Activated T-helper 1 cell treated with anti-CD3 and anti-CD28 coated beads, Interleukin-12 subunit alpha, Interleukin-12 subunit beta, Interleukin-2, Interleukin-4 antibody, amounts not matched to agents 30 ng/mL and 10 ng/mL and 1 ng/mL, durations not matched to agents 14 hours and 24 hours and 36 hours (primary cell): ENCODE measurements at regions of chr12 and their contacts with region 1.

Region 1: GRCh38 chr12:85866986-85867776 is 6.9 kb upstream of the NTS start:
- DNase-seq: no peak
- H3K4me3 Mint-ChIP-seq: no peak overlapping the region
- H3K27ac Mint-ChIP-seq: no peak overlapping the region
- H3K4me1 Mint-ChIP-seq: no peaks in the 10 kb centered on the region
- H3K27me3 Mint-ChIP-seq: peaks cover 3% of the 10 kb centered on the region

Region 2: GRCh38 chr12:85468356-85469157 is 398.6 kb before region 1 on chr12:
- intact Hi-C with region 1: loop called (anchors 1 kb)
- DNase-seq: peak; percentile 13
- H3K4me3 Mint-ChIP-seq: peak overlapping the region; percentile 74
- H3K27ac Mint-ChIP-seq: no peak overlapping the region
- H3K4me1 Mint-ChIP-seq: peaks cover 17% of the 10 kb centered on the region
- H3K27me3 Mint-ChIP-seq: no peaks in the 10 kb centered on the region

Region 3: DNA sequence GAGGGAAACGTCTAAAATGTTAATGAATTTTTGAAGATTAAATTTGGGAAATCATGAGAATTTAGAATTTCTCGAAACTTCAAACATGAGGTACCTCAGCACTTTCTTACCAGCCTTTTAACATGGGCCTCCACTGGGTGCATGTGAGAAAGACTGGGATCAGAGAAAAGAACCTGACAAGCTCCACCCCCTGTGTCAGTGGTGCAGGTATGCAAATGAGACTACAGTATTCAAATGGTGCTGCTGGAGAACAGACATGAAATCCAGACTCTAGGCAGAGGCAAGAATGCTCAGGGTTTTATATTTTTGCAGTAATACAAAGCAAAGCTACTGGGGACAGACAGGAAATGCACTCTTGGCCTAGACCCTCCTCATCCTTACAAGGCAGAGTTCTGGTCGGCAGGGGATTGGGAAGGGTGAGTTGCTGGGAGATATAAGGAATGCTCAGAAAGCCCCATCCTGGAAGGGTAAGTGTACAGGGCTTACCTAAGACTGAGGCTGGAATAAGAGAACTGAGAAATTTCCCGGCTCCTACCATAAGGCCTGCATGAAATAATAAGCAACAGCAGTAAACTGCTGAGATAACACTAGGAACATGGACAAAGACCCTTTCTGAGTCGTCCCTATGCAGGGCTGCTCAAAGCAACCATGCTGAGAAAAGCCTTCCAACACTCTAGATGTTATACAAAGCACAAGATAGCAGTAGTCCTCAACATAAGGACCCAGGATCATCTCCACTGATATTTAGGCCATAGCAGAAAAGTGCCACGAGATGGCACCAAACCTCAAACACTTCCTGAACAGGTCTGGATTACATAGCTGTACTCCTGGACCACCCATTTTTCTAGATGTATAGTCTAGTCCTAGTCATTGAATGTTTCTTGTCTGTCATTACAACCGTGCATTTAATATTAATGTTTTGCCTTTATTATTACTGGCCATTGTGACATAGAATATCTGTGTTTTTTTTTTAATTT is 291.8 kb before region 1 on chr12:
- intact Hi-C with region 1: loop called (anchors 1 kb)
- DNase-seq: no peak
- H3K4me3 Mint-ChIP-seq: no peak overlapping the region
- H3K27ac Mint-ChIP-seq: no peak overlapping the region
- H3K4me1 Mint-ChIP-seq: no peaks in the 10 kb centered on the region
- H3K27me3 Mint-ChIP-seq: no peaks in the 10 kb centered on the region

Region 4: DNA sequence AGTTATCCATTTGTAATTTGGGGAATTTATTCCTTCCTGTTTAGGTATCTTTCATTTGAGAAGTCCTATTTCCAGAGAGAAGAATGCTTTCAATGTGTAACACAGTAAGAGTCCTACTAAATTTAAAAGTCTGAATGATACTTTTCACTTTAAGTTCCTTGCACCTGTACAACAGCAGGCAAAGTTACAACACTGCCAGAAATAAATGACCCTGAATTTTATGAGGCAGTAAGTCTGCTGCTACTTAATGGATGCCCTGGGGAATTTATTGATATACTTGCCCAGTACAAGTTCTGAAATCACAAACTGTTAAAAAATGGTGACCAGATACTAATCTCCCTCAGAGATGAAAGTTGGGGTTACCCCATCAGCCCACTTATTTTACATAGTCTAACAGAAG is 60.0 kb after region 1 on chr12:
- intact Hi-C with region 1: no loop called
- DNase-seq: no peak
- H3K4me3 Mint-ChIP-seq: no peak overlapping the region
- H3K27ac Mint-ChIP-seq: no peak overlapping the region
- H3K4me1 Mint-ChIP-seq: no peaks in the 10 kb centered on the region
- H3K27me3 Mint-ChIP-seq: no peaks in the 10 kb centered on the region